ENCODE measurements at regions of chr19 and their contacts with region 1.

Region 1: DNA sequence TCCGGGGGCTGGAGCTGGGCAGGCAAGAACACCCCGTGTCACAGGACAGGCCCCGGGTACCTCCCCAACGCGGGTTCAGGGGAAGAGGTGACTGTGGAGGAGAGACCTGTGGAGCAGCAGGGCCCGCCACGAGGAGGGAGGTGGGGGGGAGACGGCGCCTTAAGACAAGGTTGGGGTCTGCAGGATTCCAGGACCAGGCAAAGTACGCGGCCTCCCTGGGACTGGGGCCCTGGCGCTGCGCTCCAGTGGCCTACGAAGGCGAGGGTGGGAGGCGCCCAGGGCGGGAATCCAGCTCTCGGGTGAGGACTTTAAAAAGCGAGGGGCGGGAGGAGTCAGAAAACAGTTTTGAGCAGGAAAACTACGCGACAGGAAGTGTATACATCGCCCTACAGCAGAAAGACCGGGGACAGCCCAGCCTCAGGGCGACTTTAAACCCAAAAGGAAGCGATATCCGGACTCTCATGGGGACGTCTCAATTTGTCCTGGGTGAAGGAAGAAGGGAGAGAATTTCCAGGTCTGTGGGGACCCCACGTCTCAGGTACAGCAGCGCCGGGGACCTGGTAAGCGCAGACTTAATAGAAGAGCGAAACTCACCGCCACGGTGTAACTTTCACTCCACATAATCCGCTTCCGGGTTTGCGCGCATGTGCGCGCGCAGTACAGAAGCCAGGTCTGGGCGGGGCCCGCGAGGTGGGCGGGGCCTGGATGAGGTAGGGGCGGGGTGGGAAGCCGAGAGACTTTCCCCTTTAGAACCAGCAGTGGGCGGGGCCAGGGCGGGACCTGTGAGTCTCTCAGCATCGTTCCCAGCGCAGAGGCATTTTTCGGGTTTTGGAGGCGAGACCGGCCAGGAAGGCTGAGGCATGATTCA is at the start of gene ZNF83:
- DNase-seq: peak; percentile 81 to 97 (median 92)
- ATAC-seq: peak; percentile 99
- H3K4me3 ChIP-seq: peak within 1 kb of the TSS; percentile 86
- H3K4me3 Mint-ChIP-seq: peak within 1 kb of the TSS; percentile 92 to 98 (median 95)
- H3K27ac ChIP-seq: peak within 1 kb of the TSS; percentile 99
- H3K27ac Mint-ChIP-seq: peak within 1 kb of the TSS; percentile 94 to 98 (median 97)
- H3K4me1 ChIP-seq: peaks cover 7 to 8% of the 10 kb centered on the region in 2 donors
- H3K4me1 Mint-ChIP-seq: peaks cover 11 to 27% (median 20%) of the 10 kb centered on the region in 7 donors
- H3K27me3 ChIP-seq: no peaks in the 10 kb centered on the region
- H3K27me3 Mint-ChIP-seq: no peaks in the 10 kb centered on the region
- total RNA-seq, gene ZNF83: 49.7 to 113 (median 70.5) TPM

Region 2: DNA sequence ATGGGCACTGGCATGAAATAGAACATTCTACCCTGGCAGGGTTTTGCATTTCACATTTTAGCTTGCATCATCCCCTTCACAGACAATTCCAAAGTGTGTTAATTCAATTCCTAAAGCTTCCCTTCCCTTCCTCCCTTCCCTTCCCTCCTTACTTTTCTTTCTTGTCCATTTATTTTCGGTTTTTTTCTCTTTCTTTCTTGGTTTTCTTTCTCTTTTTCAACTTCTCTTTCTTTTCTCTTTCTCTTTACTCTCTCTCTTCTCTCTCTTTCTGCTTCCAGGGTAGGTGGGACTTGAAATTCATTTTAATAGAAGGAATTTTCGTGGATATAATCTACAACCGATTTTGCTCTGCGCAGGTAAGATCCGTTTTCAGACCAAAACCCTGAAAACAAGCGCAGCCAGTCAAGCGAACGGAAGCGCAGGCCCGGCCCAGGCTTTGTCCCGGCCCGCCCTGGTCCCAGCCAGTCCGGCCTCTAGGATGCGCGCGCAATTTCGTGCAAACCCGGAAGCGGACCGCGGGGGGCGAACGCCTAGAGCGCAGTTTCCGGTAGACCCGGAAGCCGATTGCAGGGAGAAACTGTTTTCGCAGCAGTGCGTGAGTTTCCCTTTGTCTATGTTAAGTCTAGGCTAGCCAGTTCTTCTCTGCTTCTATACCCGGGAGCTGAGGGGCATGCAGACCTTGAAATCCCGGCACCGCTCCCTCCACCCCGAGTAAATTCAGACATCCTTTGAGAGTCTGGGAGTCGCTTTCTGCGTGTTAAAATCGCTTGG is 240.5 kb before region 1 on chr19 and contains the start of gene ZNF528:
- CTCF ChIA-PET with region 1: interaction called, 3 read pairs
- POLR2A ChIA-PET with region 1: no interaction called
- intact Hi-C with region 1: loop called in 1 of 2 experiments (anchors 10 kb)
- DNase-seq: peak; percentile 78 to 95 (median 87)
- ATAC-seq: peak; percentile 98
- H3K4me3 ChIP-seq: peak within 1 kb of the TSS; percentile 94
- H3K4me3 Mint-ChIP-seq: peak within 1 kb of the TSS; percentile 80 to 93 (median 90)
- H3K27ac ChIP-seq: peak within 1 kb of the TSS; percentile 65
- H3K27ac Mint-ChIP-seq: peak within 1 kb of the TSS; percentile 88 to 96 (median 91)
- H3K4me1 ChIP-seq: peaks cover 5 to 12% of the 10 kb centered on the region in 2 donors
- H3K4me1 Mint-ChIP-seq: peaks cover 15 to 34% (median 25%) of the 10 kb centered on the region in 7 donors
- H3K27me3 ChIP-seq: no peaks in the 10 kb centered on the region
- H3K27me3 Mint-ChIP-seq: no peaks in the 10 kb centered on the region
- total RNA-seq, gene ZNF528: 10.6 to 47.3 (median 23.0) TPM

Region 3: DNA sequence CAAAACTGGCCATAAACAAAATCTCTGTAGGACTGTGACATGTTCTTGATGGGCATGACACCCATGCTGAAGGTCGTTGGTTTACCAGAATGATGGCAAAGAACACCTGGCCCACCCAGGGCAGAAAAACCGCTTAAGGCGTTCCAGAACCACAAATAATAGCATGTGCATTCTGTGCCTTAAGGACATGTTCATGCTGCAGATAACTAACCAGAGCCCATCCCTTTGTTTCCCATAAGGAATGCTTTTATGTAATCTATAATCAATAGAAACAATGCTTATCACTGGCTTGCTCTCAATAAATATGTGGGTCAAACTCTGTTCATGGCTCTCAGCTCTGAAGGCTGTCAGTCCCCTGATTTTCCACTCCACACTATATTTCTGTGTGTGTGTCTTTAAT is 195.8 kb before region 1 on chr19:
- CTCF ChIA-PET with region 1: no interaction called
- POLR2A ChIA-PET with region 1: no interaction called
- intact Hi-C with region 1: no loop called
- DNase-seq: no peak
- ATAC-seq: no peak
- H3K4me3 ChIP-seq: no peak overlapping the region
- H3K4me3 Mint-ChIP-seq: no peak overlapping the region
- H3K27ac ChIP-seq: no peak overlapping the region
- H3K27ac Mint-ChIP-seq: no peak overlapping the region
- H3K4me1 ChIP-seq: no peaks in the 10 kb centered on the region
- H3K4me1 Mint-ChIP-seq: no peaks in the 10 kb centered on the region
- H3K27me3 ChIP-seq: no peaks in the 10 kb centered on the region
- H3K27me3 Mint-ChIP-seq: no peaks in the 10 kb centered on the region

Region 4: DNA sequence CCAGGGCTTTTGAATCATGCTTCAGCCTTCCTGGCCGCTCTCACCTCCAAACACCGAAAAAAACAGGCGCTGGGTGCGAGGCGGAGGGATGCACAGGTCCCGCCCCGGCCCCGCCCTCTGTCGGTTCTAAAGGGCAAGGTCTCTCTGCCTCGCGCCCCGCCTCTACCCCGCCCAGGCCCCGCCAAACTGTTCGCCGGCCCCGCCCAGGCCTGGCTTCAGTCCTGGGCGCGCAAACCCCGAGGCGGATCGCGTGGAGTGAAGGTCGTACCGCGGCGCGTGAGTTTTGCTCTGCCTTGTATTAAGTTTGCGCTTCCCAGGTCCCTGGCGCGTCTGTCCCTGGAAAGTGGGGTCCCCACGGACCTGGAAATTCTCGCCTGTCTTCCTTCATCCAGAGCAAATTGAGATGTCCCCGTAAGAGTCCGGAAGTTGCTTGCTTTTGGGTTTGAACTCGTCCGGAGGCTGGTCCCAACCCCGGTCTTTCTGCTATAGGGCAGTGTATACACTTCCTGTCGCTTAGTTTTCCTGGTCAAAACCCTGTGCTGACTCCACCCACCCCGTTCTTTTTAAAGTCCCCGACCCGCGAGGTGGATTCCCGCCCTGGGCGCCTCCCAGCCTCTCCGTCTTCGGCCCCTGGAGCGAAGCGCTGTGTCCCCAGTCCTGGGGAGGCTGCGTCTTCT is 102.0 kb before region 1 on chr19:
- CTCF ChIA-PET with region 1: no interaction called
- POLR2A ChIA-PET with region 1: no interaction called
- intact Hi-C with region 1: loop called (anchors 1 kb)
- DNase-seq: peak; percentile 60 to 87 (median 82)
- ATAC-seq: peak; percentile 99
- H3K4me3 ChIP-seq: peak overlapping the region; percentile 84
- H3K4me3 Mint-ChIP-seq: peak overlapping the region; percentile 83 to 99 (median 90)
- H3K27ac ChIP-seq: peak overlapping the region; percentile 87
- H3K27ac Mint-ChIP-seq: peak overlapping the region; percentile 69 to 95 (median 87)
- H3K4me1 ChIP-seq: no peaks in the 10 kb centered on the region
- H3K4me1 Mint-ChIP-seq: peaks cover 16 to 44% (median 34%) of the 10 kb centered on the region in 7 donors
- H3K27me3 ChIP-seq: no peaks in the 10 kb centered on the region
- H3K27me3 Mint-ChIP-seq: no peaks in the 10 kb centered on the region

Region 5: DNA sequence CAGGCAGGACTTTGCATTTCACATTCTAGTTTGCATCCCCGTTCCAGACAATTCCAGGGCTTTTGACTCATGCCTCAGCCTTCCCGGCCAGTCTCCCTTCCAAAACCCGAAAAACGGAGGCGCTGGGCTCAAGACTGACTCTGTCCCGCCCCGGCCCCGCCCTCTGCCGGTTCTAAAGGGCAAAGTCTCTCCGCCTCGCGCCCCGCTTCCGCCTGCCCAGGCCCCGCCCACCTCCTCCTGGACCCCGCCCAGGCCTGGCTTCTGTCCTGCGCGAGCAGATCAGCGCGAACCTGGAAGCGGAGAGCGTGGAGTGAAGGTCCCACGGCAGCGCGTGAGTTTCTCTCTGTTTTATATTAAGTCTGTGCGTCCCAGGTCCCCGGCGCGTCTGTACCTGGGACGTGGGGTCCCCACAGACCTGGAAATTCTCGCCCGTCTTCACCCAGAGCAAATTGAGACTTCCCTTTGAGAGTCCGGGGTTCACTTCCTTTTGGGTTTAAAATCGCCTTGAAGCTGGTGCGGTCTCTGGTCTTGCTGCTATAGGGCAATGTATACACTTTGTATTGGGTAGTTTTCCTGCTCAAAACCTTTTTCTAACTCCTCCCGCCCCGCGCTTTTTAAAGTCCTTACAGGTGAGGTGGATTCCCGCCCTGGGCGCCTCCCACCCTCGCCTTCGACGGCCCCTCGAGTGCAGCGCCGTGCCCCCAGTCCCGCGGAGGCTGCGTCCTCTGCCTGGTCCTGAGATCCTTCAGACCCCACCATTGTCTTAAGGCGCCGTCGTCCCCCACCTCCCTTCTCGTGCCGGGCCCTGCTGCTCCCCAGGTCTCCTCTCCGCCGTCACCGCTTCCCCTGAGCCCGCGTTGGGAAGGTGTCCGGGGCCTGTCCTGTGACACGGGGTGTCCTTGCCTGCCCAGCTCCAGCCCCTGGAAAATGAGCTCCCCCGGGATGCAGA is 36.7 kb before region 1 on chr19:
- CTCF ChIA-PET with region 1: no interaction called
- POLR2A ChIA-PET with region 1: interaction called, 10 read pairs
- intact Hi-C with region 1: loop called (anchors 1 kb)
- DNase-seq: peak; percentile 84 to 94 (median 91)
- ATAC-seq: peak; percentile 100
- H3K4me3 ChIP-seq: peak overlapping the region; percentile 89
- H3K4me3 Mint-ChIP-seq: peak overlapping the region; percentile 86 to 99 (median 92)
- H3K27ac ChIP-seq: peak overlapping the region; percentile 81
- H3K27ac Mint-ChIP-seq: peak overlapping the region; percentile 63 to 93 (median 81)
- H3K4me1 ChIP-seq: peaks cover 10 to 12% of the 10 kb centered on the region in 2 donors
- H3K4me1 Mint-ChIP-seq: peaks cover 11 to 43% (median 37%) of the 10 kb centered on the region in 7 donors
- H3K27me3 ChIP-seq: no peaks in the 10 kb centered on the region
- H3K27me3 Mint-ChIP-seq: no peaks in the 10 kb centered on the region

Region 6: GRCh38 chr19:52786457-52787359 is 148.8 kb after region 1 on chr19 and contains the start of gene ZNF600:
- CTCF ChIA-PET with region 1: no interaction called
- POLR2A ChIA-PET with region 1: no interaction called
- intact Hi-C with region 1: loop called in 1 of 2 experiments (anchors 1 kb)
- DNase-seq: peak; percentile 33 to 65 (median 45)
- ATAC-seq: peak; percentile 98
- H3K4me3 ChIP-seq: peak within 1 kb of the TSS; percentile 60
- H3K4me3 Mint-ChIP-seq: peak within 1 kb of the TSS; percentile 83 to 96 (median 92)
- H3K27ac ChIP-seq: peak within 1 kb of the TSS; percentile 70
- H3K27ac Mint-ChIP-seq: peak within 1 kb of the TSS; percentile 28 to 97 (median 81)
- H3K4me1 ChIP-seq: peaks cover 0 to 3% of the 10 kb centered on the region in 2 donors
- H3K4me1 Mint-ChIP-seq: peaks cover 19 to 35% (median 32%) of the 10 kb centered on the region in 7 donors
- H3K27me3 ChIP-seq: no peaks in the 10 kb centered on the region
- H3K27me3 Mint-ChIP-seq: no peaks in the 10 kb centered on the region
- total RNA-seq, gene ZNF600: 6.7 to 30.0 (median 19.8) TPM

Region 7: DNA sequence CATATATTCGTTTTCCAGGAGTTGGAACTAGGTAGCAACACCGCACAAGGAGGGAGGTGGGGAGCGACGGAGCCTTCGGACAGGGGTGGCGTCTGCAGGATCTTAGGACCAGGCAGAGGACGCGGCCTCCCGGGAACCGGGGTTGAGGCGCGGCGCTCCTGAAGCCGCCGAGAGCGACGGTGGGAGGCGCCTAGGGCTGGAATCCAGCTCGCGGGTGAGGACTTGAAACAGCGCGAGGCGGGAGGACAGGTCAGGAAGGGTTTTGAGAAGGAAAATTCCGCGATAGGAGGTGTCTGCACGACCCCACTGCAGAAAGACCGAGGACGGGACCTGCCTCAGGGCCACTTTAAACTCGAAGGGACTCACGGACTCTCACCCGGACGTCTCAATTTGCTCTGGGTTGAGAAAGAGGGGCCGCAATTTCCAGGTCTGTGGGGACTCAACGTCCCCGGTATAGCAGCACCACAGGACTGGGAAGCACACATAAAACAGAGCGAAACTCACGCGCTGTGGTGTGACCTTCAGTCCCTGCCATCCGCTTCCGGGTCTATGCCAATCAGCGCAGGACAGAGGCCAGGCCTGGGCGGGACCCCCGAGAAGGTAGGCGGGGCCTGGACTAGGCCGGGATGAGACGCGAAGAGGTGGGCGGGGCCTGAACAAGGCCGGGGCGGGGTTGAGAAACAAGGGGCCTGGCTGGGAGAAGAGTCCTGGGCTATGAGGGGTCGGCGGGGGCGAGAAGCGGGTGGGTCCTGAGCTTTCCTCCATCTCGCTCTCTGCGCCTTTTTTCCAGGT is 259.4 kb after region 1 on chr19 and contains the start of gene ZNF320:
- CTCF ChIA-PET with region 1: no interaction called
- POLR2A ChIA-PET with region 1: no interaction called
- intact Hi-C with region 1: loop called (anchors 1 kb)
- DNase-seq: peak; percentile 78 to 92 (median 89)
- ATAC-seq: peak; percentile 100
- H3K4me3 ChIP-seq: peak within 1 kb of the TSS; percentile 96
- H3K4me3 Mint-ChIP-seq: peak within 1 kb of the TSS; percentile 88 to 96 (median 92)
- H3K27ac ChIP-seq: peak within 1 kb of the TSS; percentile 79
- H3K27ac Mint-ChIP-seq: peak within 1 kb of the TSS; percentile 19 to 94 (median 93)
- H3K4me1 ChIP-seq: peaks cover 4 to 5% of the 10 kb centered on the region in 2 donors
- H3K4me1 Mint-ChIP-seq: peaks cover 5 to 33% (median 17%) of the 10 kb centered on the region in 7 donors
- H3K27me3 ChIP-seq: no peaks in the 10 kb centered on the region
- H3K27me3 Mint-ChIP-seq: no peaks in the 10 kb centered on the region
- total RNA-seq, gene ZNF320: 4.5 to 13.4 (median 11.6) TPM

Measured in naive thymus-derived CD4-positive, alpha-beta T cell (primary cell).